GM12878 (cell line): ENCODE measurements at regions of chr11 and their contacts with region 1.

Region 1: DNA sequence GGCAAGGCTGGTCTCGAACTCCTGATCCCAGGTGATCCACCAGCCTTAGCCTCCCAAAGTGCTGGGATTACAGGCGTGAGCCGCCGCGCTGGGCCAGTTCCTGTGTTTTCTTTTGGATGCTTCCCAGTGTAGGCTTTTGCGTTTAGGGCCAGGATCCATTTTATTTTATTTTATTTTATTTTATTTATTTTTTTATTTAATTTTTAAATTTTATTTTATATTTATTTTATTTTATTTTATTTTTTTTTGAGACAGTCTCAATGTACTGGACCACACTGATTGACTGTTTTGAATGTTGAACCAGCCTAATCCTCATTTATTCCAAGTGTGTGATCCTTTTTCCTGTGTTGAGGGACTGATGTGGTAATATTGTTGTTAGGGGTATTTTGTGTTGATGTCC is 8.4 kb downstream of the EPS8L2 start:
- DNase-seq: no peak
- ATAC-seq: no peak
- H3K4me3 ChIP-seq: no peak overlapping the region
- H3K27ac ChIP-seq: no peak overlapping the region
- H3K4me1 ChIP-seq: no peaks in the 10 kb centered on the region
- H3K27me3 ChIP-seq: no peaks in the 10 kb centered on the region
- CTCF ChIP-seq: no peak
- EP300 ChIP-seq: no peak
- POLR2A ChIP-seq: no peak
- RAD21 ChIP-seq: no peak

Region 2: DNA sequence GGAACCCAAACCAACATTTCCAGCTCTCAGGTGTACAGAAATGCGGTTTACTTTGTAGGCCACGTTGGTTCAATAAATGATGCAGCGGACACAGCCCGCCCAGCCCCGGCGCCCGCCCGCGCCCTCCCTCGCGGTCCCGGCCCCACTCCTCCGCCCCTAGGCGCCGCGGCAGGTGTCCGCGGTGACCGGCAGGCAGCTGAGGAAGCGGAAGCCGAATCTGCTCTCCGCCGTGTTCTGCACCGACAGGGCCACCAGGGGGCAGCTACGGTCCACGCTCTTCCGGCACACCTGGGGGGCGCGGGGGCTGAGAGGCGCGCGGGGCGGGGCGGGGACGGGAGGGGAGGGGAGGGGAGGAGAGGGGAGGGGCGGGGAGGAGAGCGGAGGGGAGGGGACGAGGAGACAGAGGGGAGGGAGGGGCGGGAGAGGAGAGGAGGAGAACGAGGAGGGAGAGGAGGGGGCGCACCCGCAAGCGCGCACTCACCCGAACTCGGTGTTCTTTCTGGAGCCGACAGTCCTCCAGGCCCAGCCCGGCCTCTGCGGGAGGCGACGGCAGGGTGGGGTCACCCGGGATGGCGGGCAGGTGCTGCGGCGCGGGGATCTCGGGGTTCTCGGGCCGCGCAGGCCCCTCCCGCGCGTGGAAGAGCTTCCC is 159.5 kb before region 1 on chr11:
- CTCF ChIA-PET with region 1: no interaction called
- POLR2A ChIA-PET with region 1: no interaction called
- RAD21 ChIA-PET with region 1: no interaction called
- SMC1A ChIA-PET with region 1: no interaction called
- in situ Hi-C with region 1: loop called (anchors 5 kb)
- intact Hi-C with region 1: no loop called
- DNase-seq: no peak
- ATAC-seq: peak; percentile 90
- H3K4me3 ChIP-seq: peak overlapping the region; percentile 53; the same call in 1 of the 2 replicates
- H3K27ac ChIP-seq: no peak overlapping the region
- H3K4me1 ChIP-seq: peaks cover 2% of the 10 kb centered on the region
- H3K27me3 ChIP-seq: peaks cover 0 to 5% of the 10 kb centered on the region in 2 experiments; a peak in 2 of 4 replicates
- CTCF ChIP-seq: peak; percentile 48 to 79 (median 74)
- EP300 ChIP-seq: no peak
- POLR2A ChIP-seq: peak; percentile 26; the same call in 1 of the 2 replicates
- RAD21 ChIP-seq: peak; percentile 77

Region 3: DNA sequence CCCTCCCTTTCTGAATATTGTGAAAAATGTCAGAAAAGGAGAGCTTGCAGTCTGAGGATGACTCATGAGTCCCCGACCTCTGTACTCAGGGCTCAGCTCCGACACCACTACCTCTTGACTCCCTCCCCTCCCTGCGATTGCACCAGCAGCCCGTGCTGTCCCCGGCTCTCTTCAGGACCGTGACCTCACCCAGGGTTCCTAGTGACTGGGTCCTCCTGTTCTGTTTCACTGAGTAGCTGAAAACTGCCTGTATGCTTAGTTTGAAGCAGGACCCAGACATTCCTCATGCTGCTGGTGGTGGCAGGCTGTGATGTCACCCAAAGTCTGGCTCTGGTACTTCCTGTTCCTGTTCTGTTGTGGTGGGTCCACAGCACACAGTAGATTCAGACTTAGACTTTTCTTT is 126.5 kb before region 1 on chr11:
- CTCF ChIA-PET with region 1: no interaction called
- POLR2A ChIA-PET with region 1: no interaction called
- RAD21 ChIA-PET with region 1: no interaction called
- SMC1A ChIA-PET with region 1: no interaction called
- in situ Hi-C with region 1: no loop called
- intact Hi-C with region 1: no loop called
- DNase-seq: no peak
- ATAC-seq: no peak
- H3K4me3 ChIP-seq: no peak overlapping the region
- H3K27ac ChIP-seq: no peak overlapping the region
- H3K4me1 ChIP-seq: no peaks in the 10 kb centered on the region
- H3K27me3 ChIP-seq: no peaks in the 10 kb centered on the region
- CTCF ChIP-seq: no peak
- EP300 ChIP-seq: no peak
- POLR2A ChIP-seq: no peak
- RAD21 ChIP-seq: no peak

Region 4: DNA sequence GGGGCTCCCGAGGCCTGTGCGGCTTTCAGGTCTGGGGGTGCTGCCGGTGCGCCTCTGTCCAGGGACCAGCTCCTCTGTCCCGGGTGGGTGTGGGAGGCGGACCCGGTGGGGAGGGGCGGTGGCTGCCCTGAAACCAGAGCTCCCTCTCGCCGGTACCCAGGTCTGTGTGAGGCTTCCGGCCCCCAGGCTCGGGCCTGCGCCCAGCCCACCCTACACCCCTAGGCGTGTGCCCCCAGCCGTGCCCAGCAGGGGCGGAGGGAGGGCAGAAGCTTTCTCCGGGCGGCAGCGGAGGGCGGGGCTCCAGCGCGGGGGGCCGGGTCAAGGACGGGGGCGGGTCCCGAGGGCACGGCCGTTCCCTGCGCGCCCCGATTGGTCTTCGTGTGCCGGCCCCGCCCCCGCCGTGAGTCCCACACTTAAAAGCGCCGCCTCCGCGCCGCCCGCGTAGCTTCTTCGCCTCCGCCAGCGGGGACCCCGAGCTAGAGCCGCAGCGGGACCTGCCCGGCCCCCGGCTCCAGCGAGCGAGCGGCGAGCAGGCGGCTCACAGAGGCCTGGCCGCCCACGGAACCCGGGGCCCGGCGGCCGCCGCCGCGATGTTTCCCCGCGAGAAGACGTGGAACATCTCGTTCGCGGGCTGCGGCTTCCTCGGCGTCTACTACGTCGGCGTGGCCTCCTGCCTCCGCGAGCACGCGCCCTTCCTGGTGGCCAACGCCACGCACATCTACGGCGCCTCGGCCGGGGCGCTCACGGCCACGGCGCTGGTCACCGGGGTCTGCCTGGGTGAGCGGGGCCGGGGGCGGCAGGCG is 104.9 kb after region 1 on chr11:
- CTCF ChIA-PET with region 1: no interaction called
- POLR2A ChIA-PET with region 1: no interaction called
- RAD21 ChIA-PET with region 1: no interaction called
- SMC1A ChIA-PET with region 1: no interaction called
- in situ Hi-C with region 1: no loop called
- intact Hi-C with region 1: no loop called
- DNase-seq: no peak
- ATAC-seq: peak; percentile 88
- H3K4me3 ChIP-seq: peak overlapping the region; percentile 82
- H3K27ac ChIP-seq: peak overlapping the region; percentile 73
- H3K4me1 ChIP-seq: no peaks in the 10 kb centered on the region; the same call in 1 of the 2 replicates
- H3K27me3 ChIP-seq: no peaks in the 10 kb centered on the region
- CTCF ChIP-seq: peak in 1 of 3 experiments; percentile 26; a peak in 1 of 6 replicates
- EP300 ChIP-seq: no peak
- POLR2A ChIP-seq: peak; percentile 92
- RAD21 ChIP-seq: no peak